PC-3 (cell line): ENCODE measurements at regions of chr10 and their contacts with region 1.

Region 1: GRCh38 chr10:67306588-67307205 is 380.9 kb downstream of the LRRTM3 start:
- DNase-seq: peak; percentile 88
- ATAC-seq: peak; percentile 81
- H3K4me3 ChIP-seq: no peak overlapping the region
- H3K27ac ChIP-seq: no peak overlapping the region
- H3K4me1 ChIP-seq: no peaks in the 10 kb centered on the region
- H3K27me3 ChIP-seq: peaks cover 35% of the 10 kb centered on the region
- CTCF ChIP-seq: peak; percentile 95

Region 2: DNA sequence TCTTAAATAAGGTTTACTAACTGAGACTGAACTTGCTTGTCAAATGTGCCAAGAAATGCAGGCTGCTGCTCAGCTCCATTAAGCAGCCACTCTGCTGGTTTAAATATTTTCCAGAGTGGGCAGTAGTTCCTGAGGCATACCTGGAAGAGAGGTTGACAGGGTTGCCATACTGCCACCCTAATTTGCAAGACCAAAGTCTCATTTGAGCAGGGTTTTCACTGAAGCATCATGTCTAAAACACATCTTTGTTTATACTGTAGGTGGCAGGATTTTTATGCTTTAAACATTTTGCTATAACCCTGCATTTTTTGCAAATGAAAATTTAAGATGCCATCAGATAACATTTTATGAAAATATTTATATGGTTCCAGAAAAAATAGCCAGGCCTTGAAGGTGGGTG is 998.9 kb before region 1 on chr10:
- CTCF ChIA-PET with region 1: no interaction called
- POLR2A ChIA-PET with region 1: no interaction called
- intact Hi-C with region 1: loop called (anchors 10 kb)
- DNase-seq: peak; percentile 78
- ATAC-seq: peak; percentile 87
- H3K4me3 ChIP-seq: no peak overlapping the region
- H3K27ac ChIP-seq: no peak overlapping the region
- H3K4me1 ChIP-seq: no peaks in the 10 kb centered on the region
- H3K27me3 ChIP-seq: no peaks in the 10 kb centered on the region
- CTCF ChIP-seq: peak; percentile 91

Region 3: GRCh38 chr10:66941491-66941890 is 365.2 kb before region 1 on chr10:
- CTCF ChIA-PET with region 1: no interaction called
- POLR2A ChIA-PET with region 1: no interaction called
- intact Hi-C with region 1: loop called (anchors 5 kb)
- DNase-seq: no peak
- ATAC-seq: 0 out of 2 replicates have a peak, but pooled peaks have one; percentile 17
- H3K4me3 ChIP-seq: no peak overlapping the region
- H3K27ac ChIP-seq: no peak overlapping the region
- H3K4me1 ChIP-seq: no peaks in the 10 kb centered on the region
- H3K27me3 ChIP-seq: peaks cover 52% of the 10 kb centered on the region
- CTCF ChIP-seq: no peak

Region 4: DNA sequence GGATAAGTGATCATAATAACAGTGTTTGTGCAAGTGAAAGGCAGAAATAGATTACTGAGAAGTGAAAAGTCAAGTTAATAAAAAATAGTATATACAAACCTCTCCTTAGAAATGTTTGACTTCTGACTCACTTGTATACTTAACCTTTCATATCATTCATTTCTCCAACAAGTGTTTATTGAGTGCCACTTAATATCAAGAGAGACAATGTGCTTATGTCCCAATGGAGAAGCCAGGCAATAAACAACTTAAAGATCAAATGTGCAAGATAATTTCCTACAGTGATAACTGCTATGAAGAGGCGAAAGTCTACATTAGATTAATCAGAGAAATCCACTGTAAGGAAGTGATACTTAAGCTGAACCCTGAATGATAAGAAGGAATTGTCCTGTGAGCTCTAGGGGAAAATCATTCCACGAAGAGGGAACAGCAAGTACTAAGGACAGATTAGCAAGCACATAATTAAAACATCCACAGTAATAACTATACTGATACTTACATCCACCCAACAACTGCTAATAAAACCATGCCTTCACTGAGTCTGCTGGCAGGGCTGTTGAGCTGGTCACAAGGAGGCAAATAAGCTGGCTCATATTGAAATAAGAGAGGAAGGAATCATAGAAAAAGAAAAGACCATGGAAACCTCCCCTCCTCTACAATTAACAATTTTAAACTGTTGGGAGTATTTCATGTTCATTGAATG is 185.8 kb after region 1 on chr10:
- CTCF ChIA-PET with region 1: no interaction called
- POLR2A ChIA-PET with region 1: no interaction called
- intact Hi-C with region 1: loop called (anchors 1 kb)
- DNase-seq: peak; percentile 88
- ATAC-seq: peak; percentile 92
- H3K4me3 ChIP-seq: peak overlapping the region; percentile 21
- H3K27ac ChIP-seq: peak overlapping the region; percentile 40
- H3K4me1 ChIP-seq: peaks cover 19% of the 10 kb centered on the region
- H3K27me3 ChIP-seq: no peaks in the 10 kb centered on the region
- CTCF ChIP-seq: no peak

Region 5: GRCh38 chr10:67506082-67506756 is 199.5 kb after region 1 on chr10:
- CTCF ChIA-PET with region 1: no interaction called
- POLR2A ChIA-PET with region 1: no interaction called
- intact Hi-C with region 1: loop called (anchors 1 kb)
- DNase-seq: peak; percentile 50
- ATAC-seq: peak; percentile 44
- H3K4me3 ChIP-seq: no peak overlapping the region
- H3K27ac ChIP-seq: no peak overlapping the region
- H3K4me1 ChIP-seq: peaks cover 10% of the 10 kb centered on the region
- H3K27me3 ChIP-seq: no peaks in the 10 kb centered on the region
- CTCF ChIP-seq: peak; percentile 52; the same call in 1 of the 2 replicates